Activated CD8-positive, alpha-beta memory T cell treated with anti-CD3 and anti-CD28 coated beads, Interleukin-2, amount 10 ng/mL, durations not matched to agents 7 days and 5 days (primary cell): ENCODE measurements at regions of chr1 and their contacts with region 1.

Region 1: DNA sequence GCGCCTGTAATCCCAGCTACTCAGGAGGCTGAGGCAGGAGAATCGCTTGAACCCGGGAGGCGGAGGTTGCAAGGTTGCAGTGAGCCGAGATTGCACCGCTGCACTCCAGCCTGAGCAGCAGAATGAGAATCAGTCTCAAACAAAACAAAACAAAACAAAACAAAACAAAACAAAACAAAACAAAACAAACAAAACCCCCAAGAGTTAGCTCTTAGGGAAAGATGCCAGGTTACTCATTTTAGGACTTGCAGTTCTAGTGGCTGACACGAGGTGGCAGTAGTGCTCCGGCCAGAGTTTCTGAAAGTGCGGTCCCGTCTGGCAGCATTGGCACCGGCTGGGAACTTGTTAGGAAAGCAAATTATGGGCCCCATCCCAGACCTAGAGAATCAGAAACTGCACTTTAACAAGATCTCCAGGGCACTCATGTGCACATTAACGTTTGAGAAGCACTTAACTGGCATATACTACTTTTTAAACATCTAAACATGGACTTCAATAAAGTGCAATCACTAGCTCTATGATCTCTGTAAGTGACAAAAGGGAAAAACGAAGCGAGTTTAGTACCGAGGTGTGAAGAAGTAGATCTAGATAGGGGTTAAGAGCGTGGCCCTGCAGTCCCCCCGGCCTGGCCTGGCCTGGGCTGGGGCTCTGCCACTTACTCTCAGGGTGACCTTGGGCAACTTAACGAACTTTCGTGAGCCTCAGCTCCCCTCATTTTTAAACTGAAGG is 41.9 kb upstream of the TNFRSF1B start:
- DNase-seq: peak; percentile 83
- ATAC-seq: peak; percentile 69
- H3K4me3 Mint-ChIP-seq: no peak overlapping the region
- H3K27ac Mint-ChIP-seq: peak overlapping the region; percentile 55
- H3K4me1 Mint-ChIP-seq: peaks cover 17% of the 10 kb centered on the region
- H3K27me3 Mint-ChIP-seq: no peaks in the 10 kb centered on the region

Region 2: DNA sequence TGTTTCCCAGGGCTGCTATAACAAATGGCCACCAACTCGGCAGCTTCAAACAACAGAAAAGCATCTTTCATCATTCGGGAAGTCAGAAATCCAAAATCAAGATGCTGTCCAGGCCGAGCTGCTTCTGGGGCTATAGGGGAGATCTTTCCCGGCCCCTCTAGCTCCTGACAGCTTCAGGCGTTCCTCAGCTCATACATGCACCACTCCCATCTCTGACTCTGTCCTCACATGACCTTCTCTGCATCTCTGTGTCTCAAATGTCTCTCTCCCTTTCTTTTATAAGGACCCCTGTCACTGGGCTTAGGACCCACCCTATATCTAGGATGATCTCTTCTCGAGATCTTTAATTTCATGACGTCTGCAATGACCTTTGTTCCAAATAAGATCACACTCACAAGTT is 252.3 kb before region 1 on chr1:
- CTCF ChIA-PET with region 1: no interaction called
- DNase-seq: no peak
- ATAC-seq: no peak
- H3K4me3 Mint-ChIP-seq: no peak overlapping the region
- H3K27ac Mint-ChIP-seq: no peak overlapping the region
- H3K4me1 Mint-ChIP-seq: no peaks in the 10 kb centered on the region
- H3K27me3 Mint-ChIP-seq: peaks cover 21% of the 10 kb centered on the region

Region 3: DNA sequence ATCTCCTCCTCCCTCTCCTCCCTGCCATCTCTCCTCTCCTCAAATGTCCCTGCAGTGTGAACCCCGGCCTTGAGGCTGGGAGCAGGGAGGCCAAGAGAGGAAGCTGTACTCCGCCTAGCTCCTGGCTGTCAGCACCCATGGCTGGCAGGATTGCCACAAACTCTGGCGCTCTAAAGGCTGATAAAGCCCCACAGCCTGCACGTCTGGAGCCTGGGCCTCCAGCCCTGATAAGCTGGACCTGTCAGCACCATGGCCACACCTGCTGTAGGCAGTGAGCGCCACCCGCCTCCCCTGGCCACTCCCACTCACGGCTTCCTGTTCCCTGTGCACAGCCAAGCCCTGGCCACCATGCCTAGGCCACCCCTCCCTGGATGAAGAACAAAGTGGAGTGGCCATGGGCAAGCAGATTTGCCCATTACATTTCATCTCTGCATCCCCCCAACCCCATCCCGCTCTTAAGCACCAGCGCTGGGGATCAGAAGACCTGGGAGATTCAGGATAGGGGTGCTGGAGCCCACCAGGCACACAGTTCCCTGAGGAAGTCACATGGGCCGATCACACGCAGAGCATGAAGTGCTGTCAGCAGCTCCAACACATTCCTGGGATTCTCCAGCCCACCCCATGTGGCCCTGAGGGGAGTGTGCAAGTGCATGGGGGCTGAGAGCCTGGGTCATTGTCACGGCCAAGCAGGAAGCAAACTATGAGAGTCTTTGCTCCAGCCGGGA is 241.9 kb before region 1 on chr1:
- CTCF ChIA-PET with region 1: no interaction called
- DNase-seq: peak; percentile 45
- ATAC-seq: peak; percentile 53
- H3K4me3 Mint-ChIP-seq: no peak overlapping the region
- H3K27ac Mint-ChIP-seq: no peak overlapping the region
- H3K4me1 Mint-ChIP-seq: no peaks in the 10 kb centered on the region
- H3K27me3 Mint-ChIP-seq: peaks cover 10% of the 10 kb centered on the region

Region 4: GRCh38 chr1:12095452-12096263 is 29.2 kb before region 1 on chr1:
- CTCF ChIA-PET with region 1: interaction called, 10 read pairs
- DNase-seq: no peak
- ATAC-seq: no peak
- H3K4me3 Mint-ChIP-seq: no peak overlapping the region
- H3K27ac Mint-ChIP-seq: no peak overlapping the region
- H3K4me1 Mint-ChIP-seq: peaks cover 6% of the 10 kb centered on the region
- H3K27me3 Mint-ChIP-seq: no peaks in the 10 kb centered on the region

Region 5: GRCh38 chr1:12143631-12144155 is 18.8 kb after region 1 on chr1:
- CTCF ChIA-PET with region 1: interaction called, 50 read pairs
- DNase-seq: no peak
- ATAC-seq: no peak
- H3K4me3 Mint-ChIP-seq: no peak overlapping the region
- H3K27ac Mint-ChIP-seq: peak overlapping the region; percentile 70
- H3K4me1 Mint-ChIP-seq: peaks cover 48% of the 10 kb centered on the region
- H3K27me3 Mint-ChIP-seq: no peaks in the 10 kb centered on the region

Region 6: GRCh38 chr1:12177999-12178441 is 53.2 kb after region 1 on chr1:
- CTCF ChIA-PET with region 1: interaction called, 104 read pairs
- DNase-seq: peak; percentile 86
- ATAC-seq: peak; percentile 45
- H3K4me3 Mint-ChIP-seq: peak overlapping the region; percentile 60
- H3K27ac Mint-ChIP-seq: peak overlapping the region; percentile 99
- H3K4me1 Mint-ChIP-seq: peaks cover 88% of the 10 kb centered on the region
- H3K27me3 Mint-ChIP-seq: no peaks in the 10 kb centered on the region

Region 7: GRCh38 chr1:12215118-12215961 is 90.5 kb after region 1 on chr1:
- CTCF ChIA-PET with region 1: interaction called, 296 read pairs
- DNase-seq: no peak
- ATAC-seq: no peak
- H3K4me3 Mint-ChIP-seq: no peak overlapping the region
- H3K27ac Mint-ChIP-seq: no peak overlapping the region
- H3K4me1 Mint-ChIP-seq: peaks cover 6% of the 10 kb centered on the region
- H3K27me3 Mint-ChIP-seq: peaks cover 6% of the 10 kb centered on the region

Region 8: GRCh38 chr1:12255918-12256317 is 131.1 kb after region 1 on chr1:
- CTCF ChIA-PET with region 1: interaction called, 17 read pairs
- DNase-seq: no peak
- ATAC-seq: no peak
- H3K4me3 Mint-ChIP-seq: no peak overlapping the region
- H3K27ac Mint-ChIP-seq: no peak overlapping the region
- H3K4me1 Mint-ChIP-seq: no peaks in the 10 kb centered on the region
- H3K27me3 Mint-ChIP-seq: no peaks in the 10 kb centered on the region

Region 9: GRCh38 chr1:12587981-12588640 is 463.3 kb after region 1 on chr1:
- CTCF ChIA-PET with region 1: no interaction called
- DNase-seq: no peak
- ATAC-seq: no peak
- H3K4me3 Mint-ChIP-seq: no peak overlapping the region
- H3K27ac Mint-ChIP-seq: peak overlapping the region; percentile 18
- H3K4me1 Mint-ChIP-seq: no peaks in the 10 kb centered on the region
- H3K27me3 Mint-ChIP-seq: no peaks in the 10 kb centered on the region